Motor neuron (in vitro differentiated cells): ENCODE measurements at regions of chr7 and their contacts with region 1.

Region 1: DNA sequence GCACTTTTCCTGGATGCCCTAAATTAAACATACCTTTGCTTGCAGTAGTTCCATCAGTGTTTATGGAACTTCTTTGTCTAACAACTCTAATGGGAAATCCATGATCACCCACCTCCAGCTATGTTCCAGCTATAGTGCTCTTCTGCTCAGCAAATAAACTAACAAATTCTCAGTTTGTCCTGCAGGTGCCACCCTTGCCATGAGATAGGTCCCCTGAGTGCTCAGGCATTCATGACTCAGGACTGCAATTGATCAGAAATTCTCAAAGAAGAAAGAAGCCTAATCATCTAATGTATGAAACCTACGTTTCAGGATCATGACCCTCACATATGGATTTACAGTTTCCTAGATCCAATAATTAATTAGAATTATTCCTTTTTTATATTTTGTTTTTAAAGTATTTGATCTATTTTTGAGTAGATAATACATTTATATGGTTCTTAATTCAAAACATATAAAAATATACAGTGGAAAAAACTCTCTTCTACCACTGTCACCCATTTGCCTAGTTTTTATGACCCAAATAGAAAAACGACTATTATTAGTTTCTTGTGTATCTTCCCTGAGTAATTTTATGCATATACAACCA is 48.7 kb upstream of the DYNC1I1 start:
- ATAC-seq: peak; percentile 59 to 95 (median 86)
- H3K4me3 ChIP-seq: no peak overlapping the region
- H3K27ac ChIP-seq: no peak overlapping the region
- H3K4me1 ChIP-seq: no peaks in the 10 kb centered on the region

Region 2: DNA sequence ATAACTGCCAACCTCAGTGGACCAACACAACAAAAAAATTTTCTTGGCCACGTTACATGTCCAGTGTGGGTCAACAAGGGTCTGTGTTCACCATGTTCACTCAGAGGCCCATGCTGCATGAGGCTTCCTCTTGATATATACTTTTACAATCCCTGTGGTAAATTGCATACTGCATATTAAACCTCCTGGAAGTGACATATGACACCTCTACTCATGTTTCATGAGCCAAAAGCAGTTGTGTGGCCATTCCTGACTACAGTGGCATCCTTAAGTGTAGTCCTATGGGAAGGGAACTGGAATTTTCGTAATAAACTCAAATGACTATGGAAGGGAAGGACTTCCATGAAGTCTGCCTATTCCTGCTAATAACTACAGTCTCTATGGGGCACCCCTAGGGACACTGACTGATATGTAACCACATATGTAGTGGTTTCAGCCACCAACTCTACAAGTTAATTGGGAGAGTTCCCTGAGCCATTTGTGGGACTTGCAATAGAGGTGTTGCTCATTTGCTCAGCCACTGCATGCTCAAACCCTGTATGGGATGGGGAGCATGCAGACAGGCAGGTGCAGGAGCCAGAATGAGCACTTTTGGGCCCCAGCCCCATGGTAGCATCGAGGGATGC is 58.4 kb after region 1 on chr7:
- in situ Hi-C with region 1: loop called in 1 of 9 experiments (anchors 10 kb)
- ATAC-seq: peak in 2 of 8 experiments; percentile 22 to 67
- H3K4me3 ChIP-seq: no peak overlapping the region
- H3K27ac ChIP-seq: no peak overlapping the region
- H3K4me1 ChIP-seq: no peaks in the 10 kb centered on the region

Region 3: GRCh38 chr7:95865716-95866371 is 142.2 kb after region 1 on chr7:
- in situ Hi-C with region 1: loop called in 6 of 9 experiments (anchors 10 to 25 kb)
- ATAC-seq: peak in 4 of 8 experiments; percentile 56 to 90 (median 66)
- H3K4me3 ChIP-seq: no peak overlapping the region
- H3K27ac ChIP-seq: no peak overlapping the region
- H3K4me1 ChIP-seq: no peaks in the 10 kb centered on the region

Region 4: GRCh38 chr7:95871078-95871782 is 147.5 kb after region 1 on chr7:
- in situ Hi-C with region 1: loop called in 6 of 9 experiments (anchors 10 to 25 kb)
- ATAC-seq: peak in 4 of 8 experiments; percentile 57 to 87 (median 78)
- H3K4me3 ChIP-seq: no peak overlapping the region
- H3K27ac ChIP-seq: no peak overlapping the region
- H3K4me1 ChIP-seq: no peaks in the 10 kb centered on the region